ENCODE measurements at regions of chr12 and their contacts with region 1.

Region 1: DNA sequence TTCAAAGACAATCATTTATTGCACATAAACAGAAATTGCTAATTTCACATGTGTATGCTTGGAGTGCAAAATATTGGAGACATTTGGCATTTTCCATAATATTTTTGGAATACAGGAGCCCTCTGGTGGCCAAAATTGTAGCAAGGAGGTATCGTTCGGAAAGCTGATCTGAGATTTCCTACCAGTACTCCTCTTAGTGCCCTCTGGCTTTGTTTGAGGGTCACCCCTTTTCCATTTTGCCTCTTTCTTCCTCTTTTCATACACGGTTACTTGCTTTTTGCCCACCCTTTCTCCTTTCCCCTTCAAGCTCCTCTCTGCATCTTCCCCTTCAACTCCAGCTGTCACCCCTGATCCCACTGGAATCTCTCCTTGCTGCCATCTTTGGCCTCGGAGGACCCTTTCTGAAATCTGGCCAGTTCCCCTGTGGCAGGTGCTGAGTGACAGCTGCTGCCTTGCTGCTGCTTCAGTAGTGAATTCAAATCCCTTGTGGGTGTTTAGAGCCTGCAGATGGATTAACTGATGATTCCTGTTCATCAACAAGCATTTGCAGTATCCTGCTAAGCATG is 164.6 kb upstream of the PARP11 start:
- DNase-seq: peak in 5 of 9 donors; percentile 19 to 31 (median 21)
- ATAC-seq: no peak
- H3K4me3 ChIP-seq: no peak overlapping the region
- H3K4me3 Mint-ChIP-seq: no peak overlapping the region
- H3K27ac ChIP-seq: no peak overlapping the region
- H3K27ac Mint-ChIP-seq: no peak overlapping the region
- H3K4me1 ChIP-seq: no peaks in the 10 kb centered on the region
- H3K4me1 Mint-ChIP-seq: peaks cover 0 to 15% (median 0%) of the 10 kb centered on the region in 7 donors
- H3K27me3 ChIP-seq: no peaks in the 10 kb centered on the region
- H3K27me3 Mint-ChIP-seq: peaks cover 0 to 39% (median 0%) of the 10 kb centered on the region in 5 donors

Region 2: GRCh38 chr12:3879846-3880245 is 158.0 kb before region 1 on chr12:
- CTCF ChIA-PET with region 1: interaction called, 100 read pairs
- POLR2A ChIA-PET with region 1: interaction called, 4 read pairs
- intact Hi-C with region 1: loop called (anchors 1 to 2 kb)
- DNase-seq: no peak
- ATAC-seq: no peak
- H3K4me3 ChIP-seq: no peak overlapping the region
- H3K4me3 Mint-ChIP-seq: peak overlapping the region in 7 of 10 donors; percentile 22 to 78 (median 56)
- H3K27ac ChIP-seq: no peak overlapping the region
- H3K27ac Mint-ChIP-seq: peak overlapping the region; percentile 60 to 93 (median 89)
- H3K4me1 ChIP-seq: peaks cover 0 to 16% of the 10 kb centered on the region in 2 donors
- H3K4me1 Mint-ChIP-seq: peaks cover 4 to 28% (median 23%) of the 10 kb centered on the region in 7 donors
- H3K27me3 ChIP-seq: no peaks in the 10 kb centered on the region
- H3K27me3 Mint-ChIP-seq: peaks cover 0 to 16% (median 0%) of the 10 kb centered on the region in 5 donors

Region 3: GRCh38 chr12:3998968-3999826 is 38.6 kb before region 1 on chr12:
- CTCF ChIA-PET with region 1: interaction called, 29 read pairs
- POLR2A ChIA-PET with region 1: interaction called, 7 read pairs
- intact Hi-C with region 1: loop called in 1 of 2 experiments (anchors 1 kb)
- DNase-seq: peak in 5 of 9 donors; percentile 15 to 37 (median 21)
- ATAC-seq: peak; percentile 58
- H3K4me3 ChIP-seq: no peak overlapping the region
- H3K4me3 Mint-ChIP-seq: no peak overlapping the region
- H3K27ac ChIP-seq: no peak overlapping the region
- H3K27ac Mint-ChIP-seq: peak overlapping the region in 3 of 9 donors; percentile 18 to 37 (median 36)
- H3K4me1 ChIP-seq: peaks cover 0 to 11% of the 10 kb centered on the region in 2 donors
- H3K4me1 Mint-ChIP-seq: peaks cover 2 to 49% (median 39%) of the 10 kb centered on the region in 7 donors
- H3K27me3 ChIP-seq: no peaks in the 10 kb centered on the region
- H3K27me3 Mint-ChIP-seq: peaks cover 0 to under 1% (median 0%) of the 10 kb centered on the region in 5 donors

Region 4: GRCh38 chr12:4307593-4308333 is 269.9 kb after region 1 on chr12:
- CTCF ChIA-PET with region 1: no interaction called
- POLR2A ChIA-PET with region 1: no interaction called
- intact Hi-C with region 1: no loop called
- DNase-seq: peak in 1 of 9 donors; percentile 7
- ATAC-seq: peak; percentile 47
- H3K4me3 ChIP-seq: no peak overlapping the region
- H3K4me3 Mint-ChIP-seq: no peak overlapping the region
- H3K27ac ChIP-seq: no peak overlapping the region
- H3K27ac Mint-ChIP-seq: peak overlapping the region in 3 of 9 donors; percentile 37 to 72 (median 65)
- H3K4me1 ChIP-seq: no peaks in the 10 kb centered on the region
- H3K4me1 Mint-ChIP-seq: peaks cover 0 to 15% (median 0%) of the 10 kb centered on the region in 7 donors
- H3K27me3 ChIP-seq: no peaks in the 10 kb centered on the region
- H3K27me3 Mint-ChIP-seq: no peaks in the 10 kb centered on the region